ENCODE measurements at regions of chr4 and their contacts with region 1.

Region 1: GRCh38 chr4:87783781-87784180 is 15.6 kb upstream of the IBSP start:
- DNase-seq: no peak
- ATAC-seq: no peak
- H3K4me3 Mint-ChIP-seq: no peak overlapping the region
- H3K27ac Mint-ChIP-seq: no peak overlapping the region
- H3K4me1 Mint-ChIP-seq: no peaks in the 10 kb centered on the region
- H3K27me3 Mint-ChIP-seq: no peaks in the 10 kb centered on the region
- CTCF ChIP-seq: no peak

Region 2: DNA sequence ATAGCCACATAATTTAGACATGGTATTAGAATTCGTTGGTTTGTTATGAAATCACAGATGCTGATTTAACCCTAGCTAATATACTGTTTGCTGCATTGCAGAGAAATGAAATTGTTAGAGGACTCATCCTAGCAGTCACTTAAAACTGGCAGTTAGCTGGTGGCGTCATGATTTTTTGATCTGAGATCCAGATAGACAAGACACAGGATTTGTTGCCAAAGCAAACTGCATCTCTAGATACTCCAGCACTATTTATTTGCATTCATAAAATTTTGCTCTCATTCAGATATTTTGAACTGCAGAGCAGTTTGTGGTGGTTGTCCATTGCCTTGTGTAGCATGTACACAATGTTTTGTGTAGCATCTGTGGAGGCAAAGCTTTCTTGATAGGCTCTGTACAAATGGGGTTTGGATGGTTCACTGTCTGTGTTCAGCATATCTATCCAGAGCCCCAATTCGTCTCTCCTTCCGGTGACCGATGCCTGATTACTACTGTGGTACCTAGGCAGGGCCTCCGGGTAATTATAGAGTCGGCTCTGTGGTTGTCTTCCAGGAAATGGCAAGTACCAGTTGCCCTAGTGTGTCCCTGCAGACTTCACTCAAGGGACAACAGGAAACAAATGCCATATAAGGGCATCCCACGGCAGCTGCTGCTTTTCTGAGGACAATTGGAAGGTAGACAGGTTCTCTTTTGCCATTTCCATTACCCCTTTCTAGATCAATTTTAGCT is 224.5 kb before region 1 on chr4:
- CTCF ChIA-PET with region 1: no interaction called
- POLR2A ChIA-PET with region 1: no interaction called
- intact Hi-C with region 1: no loop called
- DNase-seq: no peak
- ATAC-seq: peak; percentile 70
- H3K4me3 Mint-ChIP-seq: no peak overlapping the region
- H3K27ac Mint-ChIP-seq: no peak overlapping the region
- H3K4me1 Mint-ChIP-seq: peaks cover 7% of the 10 kb centered on the region
- H3K27me3 Mint-ChIP-seq: peaks cover 5% of the 10 kb centered on the region
- CTCF ChIP-seq: no peak

Region 3: DNA sequence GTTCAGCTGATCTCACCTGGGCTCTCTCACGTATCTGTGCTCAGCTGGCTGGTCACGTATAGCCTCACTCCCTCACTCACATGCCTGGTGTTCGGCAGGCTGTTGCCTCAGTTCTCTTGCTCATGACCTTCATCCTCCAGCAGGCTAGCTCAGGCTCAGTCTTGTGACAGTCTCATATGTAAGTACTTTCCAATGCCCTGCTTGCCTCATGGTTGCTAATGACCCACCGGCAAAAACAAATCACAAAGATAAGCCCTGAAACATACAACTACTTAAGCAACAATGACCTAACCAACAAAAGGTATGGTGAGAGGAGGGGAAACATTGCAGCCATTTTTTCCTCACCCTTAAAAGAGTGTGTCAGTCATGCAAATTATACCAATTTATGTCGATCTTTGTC is 74.0 kb after region 1 on chr4:
- CTCF ChIA-PET with region 1: no interaction called
- POLR2A ChIA-PET with region 1: no interaction called
- intact Hi-C with region 1: loop called (anchors 2 kb)
- DNase-seq: no peak
- ATAC-seq: no peak
- H3K4me3 Mint-ChIP-seq: no peak overlapping the region
- H3K27ac Mint-ChIP-seq: no peak overlapping the region
- H3K4me1 Mint-ChIP-seq: no peaks in the 10 kb centered on the region
- H3K27me3 Mint-ChIP-seq: no peaks in the 10 kb centered on the region
- CTCF ChIP-seq: no peak

Measured in activated B cell treated with CpG ODN at 0.5 μM for 24 hours (primary cell).